Activated T-helper 1 cell treated with anti-CD3 and anti-CD28 coated beads, Interleukin-12 subunit alpha, Interleukin-12 subunit beta, Interleukin-2, Interleukin-4 antibody, amounts not matched to agents 30 ng/mL and 10 ng/mL and 1 ng/mL, durations not matched to agents 14 hours and 24 hours and 36 hours (primary cell): ENCODE measurements at regions of chr2 and their contacts with region 1.

Region 1: DNA sequence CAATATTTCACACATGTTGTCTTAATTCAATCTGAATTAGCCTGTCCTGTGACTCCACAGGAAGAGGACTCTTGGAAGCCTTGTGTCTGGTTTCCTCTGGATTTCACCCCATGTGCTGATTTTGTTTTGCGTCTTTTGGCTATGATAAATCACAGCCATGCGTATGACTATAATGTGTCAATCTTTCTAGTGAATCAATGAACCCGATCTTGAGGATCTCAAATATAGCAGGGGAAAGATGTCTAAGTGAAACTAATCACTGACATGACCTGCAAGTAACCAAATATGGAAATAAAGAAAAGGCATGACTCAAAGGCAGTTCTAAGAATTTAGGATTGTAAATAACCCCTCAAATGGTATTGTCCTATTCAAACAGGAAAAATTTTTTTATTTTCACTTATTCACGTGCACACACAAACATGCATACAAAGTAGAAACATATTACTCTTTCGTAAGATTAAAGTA is 8.2 kb downstream of the WDFY1 start:
- DNase-seq: no peak
- H3K4me3 Mint-ChIP-seq: peak overlapping the region; percentile 19
- H3K27ac Mint-ChIP-seq: no peak overlapping the region
- H3K4me1 Mint-ChIP-seq: peaks cover 68% of the 10 kb centered on the region
- H3K27me3 Mint-ChIP-seq: no peaks in the 10 kb centered on the region

Region 2: GRCh38 chr2:223922308-223922707 is 14.6 kb before region 1 on chr2:
- intact Hi-C with region 1: loop called (anchors 1 kb)
- DNase-seq: no peak
- H3K4me3 Mint-ChIP-seq: no peak overlapping the region
- H3K27ac Mint-ChIP-seq: no peak overlapping the region
- H3K4me1 Mint-ChIP-seq: peaks cover 4% of the 10 kb centered on the region
- H3K27me3 Mint-ChIP-seq: no peaks in the 10 kb centered on the region

Region 3: GRCh38 chr2:225100856-225101294 is 1164.0 kb after region 1 on chr2:
- intact Hi-C with region 1: no loop called
- DNase-seq: no peak
- H3K4me3 Mint-ChIP-seq: no peak overlapping the region
- H3K27ac Mint-ChIP-seq: no peak overlapping the region
- H3K4me1 Mint-ChIP-seq: no peaks in the 10 kb centered on the region
- H3K27me3 Mint-ChIP-seq: no peaks in the 10 kb centered on the region